ENCODE measurements at regions of chr13 and their contacts with region 1.

Region 1: GRCh38 chr13:36346222-36347083 is at the start of gene SPART:
- DNase-seq: peak; percentile 85
- H3K4me3 Mint-ChIP-seq: peak within 1 kb of the TSS; percentile 92
- H3K27ac Mint-ChIP-seq: peak within 1 kb of the TSS; percentile 98
- H3K4me1 Mint-ChIP-seq: peaks cover 36% of the 10 kb centered on the region
- H3K27me3 Mint-ChIP-seq: peaks cover 10% of the 10 kb centered on the region
- total RNA-seq, gene SPART: 28.0 and 28.7 TPM in 2 replicates

Region 2: DNA sequence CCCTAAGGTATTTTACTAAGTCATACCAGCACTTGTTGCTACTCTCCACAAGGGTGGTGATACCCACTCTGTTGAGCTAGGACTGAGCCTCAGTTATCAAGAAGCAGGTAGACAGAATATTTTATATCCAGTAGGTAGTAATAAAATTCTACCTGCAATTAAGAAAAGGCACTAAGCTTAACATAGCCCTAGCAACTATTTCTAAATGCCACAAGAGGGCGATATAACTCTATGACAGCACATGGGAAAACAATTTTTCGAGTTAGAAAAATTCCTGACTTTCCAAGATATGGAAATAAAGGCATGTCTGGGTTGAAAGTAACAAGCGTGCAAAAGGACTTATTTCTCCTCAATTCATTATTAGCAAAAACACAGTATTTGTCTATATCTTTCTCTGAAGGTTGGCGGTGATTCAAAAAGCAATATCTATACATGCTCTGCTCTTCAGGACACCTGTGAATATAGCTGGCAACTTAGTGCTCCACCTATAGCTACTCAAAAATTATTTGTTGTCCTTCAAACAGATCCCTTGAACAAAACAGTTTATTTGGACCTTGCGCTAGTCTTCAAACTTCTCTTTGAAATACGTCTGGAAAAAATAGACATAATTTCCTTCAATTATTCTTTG is 63.5 kb before region 1 on chr13:
- intact Hi-C with region 1: loop called (anchors 2 kb)
- DNase-seq: no peak
- H3K4me3 Mint-ChIP-seq: no peak overlapping the region
- H3K27ac Mint-ChIP-seq: no peak overlapping the region
- H3K4me1 Mint-ChIP-seq: no peaks in the 10 kb centered on the region
- H3K27me3 Mint-ChIP-seq: peaks cover 14% of the 10 kb centered on the region

Region 3: GRCh38 chr13:36475468-36475867 is 129.0 kb after region 1 on chr13:
- intact Hi-C with region 1: loop called (anchors 1 kb)
- DNase-seq: no peak
- H3K4me3 Mint-ChIP-seq: no peak overlapping the region
- H3K27ac Mint-ChIP-seq: no peak overlapping the region
- H3K4me1 Mint-ChIP-seq: no peaks in the 10 kb centered on the region
- H3K27me3 Mint-ChIP-seq: peaks cover 13% of the 10 kb centered on the region

Region 4: DNA sequence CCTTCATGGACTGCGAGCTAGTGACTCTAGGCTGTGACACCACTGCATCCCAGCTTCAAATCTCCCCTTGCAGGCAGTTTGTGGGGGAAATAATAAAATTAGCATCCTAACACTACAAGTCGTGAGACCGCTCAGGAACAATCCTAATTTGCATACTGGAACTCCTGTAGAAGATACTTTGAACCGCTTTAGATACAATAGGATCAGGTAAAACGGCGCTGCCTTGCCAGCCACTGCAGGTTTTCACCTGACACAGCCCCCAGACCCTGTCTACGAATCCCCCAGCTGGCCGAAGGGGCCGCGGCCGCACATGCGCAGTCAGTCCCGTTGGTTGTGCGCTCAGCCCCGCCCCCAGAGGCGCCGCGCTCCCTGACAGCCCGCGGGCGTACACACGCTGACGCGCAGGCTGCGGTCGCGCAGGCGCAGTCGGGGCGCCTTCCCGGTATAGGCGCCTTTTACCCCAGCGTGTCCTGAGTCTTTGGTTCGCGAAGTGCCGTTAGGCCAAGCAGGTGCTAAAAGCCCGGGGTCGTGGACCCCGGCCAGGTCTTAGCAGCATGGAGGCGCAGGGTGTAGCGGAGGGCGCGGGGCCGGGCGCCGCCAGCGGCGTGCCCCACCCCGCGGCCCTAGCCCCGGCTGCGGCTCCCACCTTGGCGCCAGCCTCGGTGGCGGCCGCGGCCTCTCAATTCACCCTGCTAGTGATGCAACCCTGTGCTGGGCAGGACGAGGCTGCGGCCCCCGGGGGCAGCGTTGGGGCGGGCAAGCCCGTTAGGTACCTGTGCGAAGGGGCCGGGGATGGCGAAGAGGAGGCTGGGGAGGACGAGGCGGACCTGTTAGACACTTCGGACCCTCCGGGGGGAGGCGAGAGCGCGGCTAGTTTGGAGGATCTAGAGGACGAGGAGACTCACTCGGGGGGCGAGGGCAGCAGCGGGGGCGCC is 472.6 kb after region 1 on chr13 and contains the start of gene RFXAP:
- intact Hi-C with region 1: loop called (anchors 1 kb)
- DNase-seq: peak; percentile 89
- H3K4me3 Mint-ChIP-seq: peak within 1 kb of the TSS; percentile 96
- H3K27ac Mint-ChIP-seq: peak within 1 kb of the TSS; percentile 92
- H3K4me1 Mint-ChIP-seq: peaks cover 60% of the 10 kb centered on the region
- H3K27me3 Mint-ChIP-seq: peaks cover 8% of the 10 kb centered on the region
- total RNA-seq, gene RFXAP: 19.0 and 19.8 TPM in 2 replicates

Region 5: DNA sequence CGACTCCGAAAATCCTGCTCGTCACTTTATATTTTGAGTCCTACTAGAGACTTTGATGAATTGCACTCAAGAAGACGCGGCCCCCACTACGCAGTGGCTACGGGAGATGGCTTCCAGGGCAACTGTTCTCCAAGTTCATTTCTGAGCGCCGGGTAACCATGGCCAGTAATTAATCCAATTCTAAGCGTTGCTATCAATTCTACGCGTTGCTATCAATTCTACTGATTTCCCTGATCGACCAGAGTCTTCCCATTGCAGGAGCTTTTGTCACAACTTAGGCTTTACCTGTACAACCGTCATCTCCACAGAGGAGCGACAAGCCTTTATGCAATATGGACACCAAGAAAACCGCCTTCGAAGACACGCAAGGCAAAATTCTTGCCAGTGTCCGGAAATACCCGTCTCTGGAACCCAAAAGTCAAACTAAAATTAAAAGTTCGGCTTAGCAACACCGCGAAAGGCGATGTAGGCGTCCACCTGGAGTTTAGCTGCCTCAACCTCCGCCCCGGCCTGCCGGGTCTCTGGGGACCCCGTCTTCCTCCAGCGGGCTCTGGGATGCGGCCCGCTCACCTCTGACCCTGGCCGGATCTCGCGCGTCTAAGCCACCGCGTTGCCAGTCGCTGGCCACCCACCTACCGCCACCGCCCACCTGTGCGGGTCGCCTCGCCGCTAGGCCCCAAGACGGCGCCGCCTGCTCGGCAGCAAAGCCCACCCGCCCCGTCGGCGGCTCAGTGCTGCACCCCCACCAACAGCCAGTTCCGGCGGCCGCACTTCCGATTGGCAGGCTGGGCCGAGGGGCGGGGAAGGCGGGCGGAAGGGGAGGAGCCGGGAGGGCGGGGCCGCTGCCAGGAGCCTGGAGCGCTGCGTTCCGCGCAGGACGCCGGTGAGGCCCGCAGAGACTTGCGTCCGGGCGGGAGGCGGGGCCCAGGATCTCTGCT is 712.7 kb after region 1 on chr13 and contains the start of gene SUPT20H:
- intact Hi-C with region 1: loop called (anchors 1 kb)
- DNase-seq: peak; percentile 86
- H3K4me3 Mint-ChIP-seq: peak within 1 kb of the TSS; percentile 96
- H3K27ac Mint-ChIP-seq: peak within 1 kb of the TSS; percentile 96
- H3K4me1 Mint-ChIP-seq: peaks cover 11% of the 10 kb centered on the region
- H3K27me3 Mint-ChIP-seq: peaks cover 3% of the 10 kb centered on the region
- total RNA-seq, gene SUPT20H: 73.2 and 75.7 TPM in 2 replicates

Measured in activated T-helper 1 cell treated with anti-CD3 and anti-CD28 coated beads, Interleukin-12 subunit alpha, Interleukin-12 subunit beta, Interleukin-2, Interleukin-4 antibody, amounts not matched to agents 30 ng/mL and 10 ng/mL and 1 ng/mL, durations not matched to agents 14 hours and 24 hours and 36 hours (primary cell).